Gastrocnemius medialis (tissue), 4 donors: ENCODE measurements at regions of chr10 and their contacts with region 1.

Region 1: DNA sequence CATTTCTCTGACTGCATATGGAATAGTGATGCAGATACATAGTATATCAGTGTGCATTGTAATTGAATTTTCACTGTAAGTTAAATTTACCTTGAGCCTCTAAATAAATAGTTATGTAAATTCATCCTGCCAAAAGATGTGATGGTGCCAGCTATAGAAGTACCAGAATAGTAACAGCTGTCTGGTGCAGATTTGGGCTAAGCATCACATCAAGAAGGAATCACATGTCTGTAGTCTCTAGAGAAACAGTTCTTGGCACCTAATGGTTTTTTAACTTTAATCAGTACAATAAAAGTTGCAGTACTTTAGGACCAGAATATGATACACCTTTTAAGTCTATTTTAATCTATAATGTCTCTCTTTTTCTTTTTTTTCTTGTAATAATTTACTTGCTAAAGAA is 17.4 kb downstream of the PLEKHA1 start:
- DNase-seq: no peak
- ATAC-seq: no peak
- H3K4me3 ChIP-seq: no peak overlapping the region
- H3K27ac ChIP-seq: peak overlapping the region in 2 of 4 donors; percentile 6 to 17
- H3K4me1 ChIP-seq: peaks cover 46 to 54% of the 10 kb centered on the region in 2 donors
- H3K27me3 ChIP-seq: no peaks in the 10 kb centered on the region
- CTCF ChIP-seq: no peak
- POLR2A ChIP-seq: no peak

Region 2: DNA sequence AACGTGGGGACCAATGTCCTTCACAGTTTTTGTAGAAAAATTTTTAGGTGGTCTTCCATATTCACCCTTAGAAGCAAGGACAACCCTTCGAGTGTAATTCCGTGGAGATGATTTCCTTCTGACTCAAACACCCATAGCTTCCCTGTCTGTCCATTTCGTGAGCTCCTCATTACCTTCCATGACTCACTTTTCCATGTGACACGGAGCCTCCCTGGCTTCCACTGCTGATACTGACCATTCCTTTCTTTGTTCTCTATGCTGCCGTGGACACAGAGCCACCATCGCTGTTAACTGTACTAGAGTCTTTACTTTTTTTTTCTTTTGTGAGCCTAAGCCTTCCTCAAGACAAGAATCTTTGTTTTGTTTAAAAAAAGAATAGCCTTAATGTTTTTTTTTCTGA is 50.1 kb after region 1 on chr10:
- in situ Hi-C with region 1: no loop called
- intact Hi-C with region 1: loop called (anchors 5 kb)
- DNase-seq: no peak
- ATAC-seq: no peak
- H3K4me3 ChIP-seq: no peak overlapping the region
- H3K27ac ChIP-seq: no peak overlapping the region
- H3K4me1 ChIP-seq: peaks cover 1 to 3% of the 10 kb centered on the region in 2 donors
- H3K27me3 ChIP-seq: no peaks in the 10 kb centered on the region
- CTCF ChIP-seq: no peak
- POLR2A ChIP-seq: no peak

Region 3: DNA sequence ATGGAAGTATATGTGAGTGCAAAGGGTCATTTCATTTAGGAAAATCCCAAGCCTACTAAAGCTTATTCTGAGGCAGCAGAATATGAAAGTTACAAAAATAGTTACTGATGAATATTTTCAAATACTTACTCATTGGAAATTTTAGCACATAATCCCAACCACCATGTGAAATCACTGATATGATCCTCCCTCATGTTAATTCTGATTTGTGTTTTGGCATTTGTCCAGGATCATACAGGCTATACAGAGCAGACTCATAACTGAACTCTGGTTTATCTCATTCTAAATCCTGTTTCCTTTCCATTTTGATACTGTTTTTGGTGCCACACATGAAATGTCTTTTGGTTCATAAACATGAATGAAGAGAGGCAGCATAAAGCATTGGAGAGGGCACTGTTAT is 490.9 kb after region 1 on chr10:
- in situ Hi-C with region 1: no loop called
- intact Hi-C with region 1: no loop called
- DNase-seq: no peak
- ATAC-seq: no peak
- H3K4me3 ChIP-seq: no peak overlapping the region
- H3K27ac ChIP-seq: no peak overlapping the region
- H3K4me1 ChIP-seq: no peaks in the 10 kb centered on the region
- H3K27me3 ChIP-seq: peaks cover 0 to 5% (median 5%) of the 10 kb centered on the region in 3 donors
- CTCF ChIP-seq: no peak
- POLR2A ChIP-seq: no peak